Activated T-helper 2 cell treated with anti-CD3 and anti-CD28 coated beads, Interferon-gamma antibody, Interleukin-2, Interleukin-4, amounts not matched to agents 10 μg/mL and 5 μg/mL and 100 μg/mL, durations not matched to agents 14 hours and 24 hours and 36 hours (primary cell): ENCODE measurements at regions of chr14 and their contacts with region 1.

Region 1: GRCh38 chr14:99266181-99267178 is 5.5 kb downstream of the BCL11B start:
- DNase-seq: peak; percentile 83
- H3K4me3 Mint-ChIP-seq: peak overlapping the region; percentile 85
- H3K27ac Mint-ChIP-seq: peak overlapping the region; percentile 100
- H3K4me1 Mint-ChIP-seq: peaks cover 65% of the 10 kb centered on the region
- H3K27me3 Mint-ChIP-seq: no peaks in the 10 kb centered on the region

Region 2: DNA sequence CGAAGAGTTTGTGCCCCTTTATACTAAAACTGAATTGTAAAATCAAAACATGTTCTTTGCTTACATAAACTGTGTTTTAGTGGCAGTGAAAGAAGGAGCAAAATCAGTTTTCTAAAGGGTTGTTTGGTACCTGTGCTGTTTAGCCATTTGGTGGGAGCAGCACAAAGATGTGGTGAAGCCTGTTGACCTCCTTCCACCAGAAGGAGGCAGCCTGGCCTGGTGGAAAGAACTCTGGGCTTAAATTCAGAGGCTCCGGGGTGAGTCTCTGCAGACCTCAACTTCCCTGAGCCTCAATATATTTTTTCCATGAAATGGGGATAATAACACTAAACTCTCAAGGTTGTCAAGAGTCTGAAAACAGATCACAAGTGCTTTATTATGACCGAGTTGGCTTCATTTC is 1966.8 kb before region 1 on chr14:
- intact Hi-C with region 1: loop called (anchors 10 kb)
- DNase-seq: no peak
- H3K4me3 Mint-ChIP-seq: no peak overlapping the region
- H3K27ac Mint-ChIP-seq: no peak overlapping the region
- H3K4me1 Mint-ChIP-seq: peaks cover 32% of the 10 kb centered on the region
- H3K27me3 Mint-ChIP-seq: peaks cover 13% of the 10 kb centered on the region

Region 3: DNA sequence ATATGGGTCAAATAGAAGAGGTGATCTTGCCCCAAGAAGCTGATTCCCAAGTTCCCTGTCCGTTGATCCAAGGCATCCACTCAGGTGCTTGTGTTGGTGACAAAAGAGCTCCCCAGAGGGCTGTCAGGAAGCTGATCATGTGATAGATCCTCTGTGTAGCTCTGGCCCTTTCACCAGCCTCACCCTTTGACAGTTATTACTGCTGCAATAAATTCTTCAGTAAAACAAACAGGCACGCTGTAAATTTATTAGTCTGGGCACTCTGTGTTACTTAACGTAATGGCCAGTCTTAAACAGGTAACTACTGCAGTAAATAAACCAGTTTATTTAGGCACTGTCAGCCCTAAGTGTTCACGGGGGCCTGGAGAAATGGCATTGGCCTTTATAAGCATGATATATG is 468.4 kb before region 1 on chr14:
- intact Hi-C with region 1: no loop called
- DNase-seq: no peak
- H3K4me3 Mint-ChIP-seq: no peak overlapping the region
- H3K27ac Mint-ChIP-seq: no peak overlapping the region
- H3K4me1 Mint-ChIP-seq: no peaks in the 10 kb centered on the region
- H3K27me3 Mint-ChIP-seq: no peaks in the 10 kb centered on the region

Region 4: GRCh38 chr14:98940693-98941437 is 325.6 kb before region 1 on chr14:
- intact Hi-C with region 1: loop called (anchors 5 kb)
- DNase-seq: no peak
- H3K4me3 Mint-ChIP-seq: no peak overlapping the region
- H3K27ac Mint-ChIP-seq: no peak overlapping the region
- H3K4me1 Mint-ChIP-seq: peaks cover 39% of the 10 kb centered on the region
- H3K27me3 Mint-ChIP-seq: no peaks in the 10 kb centered on the region

Region 5: DNA sequence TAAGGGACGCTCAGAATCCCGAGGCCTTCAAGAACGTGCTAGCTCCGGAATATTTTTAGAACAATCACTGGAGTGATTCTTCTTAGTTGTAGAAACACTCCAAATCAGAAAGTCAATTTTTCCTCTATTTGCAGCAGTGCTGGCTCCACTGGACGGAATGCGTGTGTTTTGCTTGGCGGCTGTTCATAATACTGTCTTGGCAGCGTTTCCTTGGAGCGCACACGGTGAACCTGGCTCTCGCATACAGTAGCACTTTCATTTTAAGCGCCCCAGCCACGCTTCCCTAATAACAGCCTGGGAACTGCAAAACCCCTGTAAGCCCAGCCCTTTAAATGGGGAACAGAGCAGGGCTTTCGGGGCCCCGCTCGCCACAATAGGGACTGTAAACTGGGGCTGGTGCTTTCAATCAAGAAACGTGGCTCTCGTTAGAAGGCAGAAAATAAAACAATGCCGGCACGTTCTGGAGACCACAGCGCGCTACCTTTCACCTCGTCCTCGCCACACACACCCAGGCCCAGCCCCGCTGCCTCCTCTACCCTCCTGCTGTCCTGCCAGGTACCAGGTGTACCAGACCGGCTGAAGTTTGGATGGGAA is 74.4 kb before region 1 on chr14:
- intact Hi-C with region 1: loop called (anchors 2 kb)
- DNase-seq: peak; percentile 33
- H3K4me3 Mint-ChIP-seq: peak overlapping the region; percentile 91
- H3K27ac Mint-ChIP-seq: peak overlapping the region; percentile 96
- H3K4me1 Mint-ChIP-seq: peaks cover 76% of the 10 kb centered on the region
- H3K27me3 Mint-ChIP-seq: no peaks in the 10 kb centered on the region

Region 6: DNA sequence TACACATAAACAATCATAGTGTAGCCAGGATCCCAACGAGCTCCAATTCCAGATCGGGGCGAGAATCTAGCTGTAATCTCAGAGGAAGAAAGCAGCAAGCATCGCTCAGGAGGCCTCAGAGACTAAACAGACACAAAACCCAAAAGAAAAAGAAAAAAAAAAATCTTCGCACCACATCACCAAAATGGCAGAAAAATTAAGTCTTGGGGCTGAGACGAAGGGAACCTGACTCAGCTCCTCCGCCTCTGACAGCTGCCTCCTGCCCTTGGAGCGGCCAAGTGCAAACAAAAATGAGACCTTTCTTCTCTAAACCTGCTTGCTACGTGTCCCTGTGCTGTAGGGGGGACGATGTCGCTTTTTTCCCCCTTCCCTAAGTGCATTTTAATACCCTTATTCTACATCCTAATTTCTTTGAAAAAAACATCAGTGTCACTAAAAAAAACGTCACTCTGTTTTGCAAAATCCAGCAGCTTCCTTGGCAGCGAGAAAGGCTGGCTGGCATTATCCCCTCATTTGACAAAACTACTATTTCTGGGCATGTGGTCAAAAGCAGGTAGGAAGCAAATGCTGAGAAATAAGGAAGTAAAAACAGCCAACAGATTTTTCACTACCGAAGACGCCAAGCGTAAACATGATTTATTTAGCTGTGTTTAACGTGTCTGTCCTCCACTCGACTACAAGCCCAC is 25.0 kb before region 1 on chr14:
- intact Hi-C with region 1: loop called (anchors 1 kb)
- DNase-seq: no peak
- H3K4me3 Mint-ChIP-seq: peak overlapping the region; percentile 84
- H3K27ac Mint-ChIP-seq: peak overlapping the region; percentile 96
- H3K4me1 Mint-ChIP-seq: peaks cover 82% of the 10 kb centered on the region
- H3K27me3 Mint-ChIP-seq: no peaks in the 10 kb centered on the region

Region 7: GRCh38 chr14:99296517-99296916 is 30.0 kb after region 1 on chr14:
- intact Hi-C with region 1: no loop called
- DNase-seq: no peak
- H3K4me3 Mint-ChIP-seq: no peak overlapping the region
- H3K27ac Mint-ChIP-seq: no peak overlapping the region
- H3K4me1 Mint-ChIP-seq: no peaks in the 10 kb centered on the region
- H3K27me3 Mint-ChIP-seq: peaks cover 11% of the 10 kb centered on the region

Region 8: GRCh38 chr14:99415496-99416281 is 149.2 kb after region 1 on chr14:
- intact Hi-C with region 1: loop called (anchors 10 kb)
- DNase-seq: peak; percentile 57
- H3K4me3 Mint-ChIP-seq: no peak overlapping the region
- H3K27ac Mint-ChIP-seq: no peak overlapping the region
- H3K4me1 Mint-ChIP-seq: peaks cover 24% of the 10 kb centered on the region
- H3K27me3 Mint-ChIP-seq: no peaks in the 10 kb centered on the region